Activated CD8-positive, alpha-beta T cell treated with anti-CD3 and anti-CD28 coated beads for 36 hours (primary cell): ENCODE measurements at regions of chr12 and their contacts with region 1.

Region 1: DNA sequence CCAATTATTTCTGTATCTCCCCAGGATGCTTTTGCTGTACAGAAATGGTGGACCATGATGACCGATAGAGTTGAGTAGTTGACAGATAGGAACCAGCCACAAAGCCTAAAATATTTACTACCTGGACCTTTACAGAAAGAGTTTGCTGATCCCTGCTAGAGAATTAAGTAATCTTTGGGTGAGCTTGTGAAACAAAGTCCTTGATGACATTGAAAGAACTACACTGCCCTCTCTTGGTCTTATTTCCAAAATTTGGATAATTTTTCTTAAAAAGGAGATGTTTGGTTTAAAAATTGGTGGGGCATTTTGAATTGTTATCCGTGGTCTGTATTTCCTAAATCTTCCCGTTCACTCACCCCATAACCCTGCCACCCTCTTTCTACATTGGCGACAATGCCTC is 13.7 kb upstream of the TCTN1 start:
- DNase-seq: no peak
- ATAC-seq: no peak
- H3K4me3 Mint-ChIP-seq: no peak overlapping the region
- H3K27ac Mint-ChIP-seq: no peak overlapping the region
- H3K4me1 Mint-ChIP-seq: peaks cover 7% of the 10 kb centered on the region
- H3K27me3 Mint-ChIP-seq: no peaks in the 10 kb centered on the region
- CTCF ChIP-seq: peak; percentile 61

Region 2: GRCh38 chr12:110431957-110432587 is 168.2 kb before region 1 on chr12:
- CTCF ChIA-PET with region 1: interaction called, 15 read pairs
- POLR2A ChIA-PET with region 1: no interaction called
- intact Hi-C with region 1: no loop called
- DNase-seq: peak; percentile 39
- ATAC-seq: peak; percentile 40
- H3K4me3 Mint-ChIP-seq: no peak overlapping the region
- H3K27ac Mint-ChIP-seq: no peak overlapping the region
- H3K4me1 Mint-ChIP-seq: peaks cover 5% of the 10 kb centered on the region
- H3K27me3 Mint-ChIP-seq: no peaks in the 10 kb centered on the region
- CTCF ChIP-seq: no peak

Region 3: GRCh38 chr12:110501752-110502738 is 98.2 kb before region 1 on chr12 and contains the starts of genes RAD9B and VPS29:
- CTCF ChIA-PET with region 1: interaction called, 84 read pairs
- POLR2A ChIA-PET with region 1: interaction called, 15 read pairs
- intact Hi-C with region 1: no loop called
- DNase-seq: peak; percentile 100
- ATAC-seq: peak; percentile 95
- H3K4me3 Mint-ChIP-seq: peak within 1 kb of the TSS; percentile 97
- H3K27ac Mint-ChIP-seq: peak within 1 kb of the TSS; percentile 96
- H3K4me1 Mint-ChIP-seq: peaks cover 30% of the 10 kb centered on the region
- H3K27me3 Mint-ChIP-seq: no peaks in the 10 kb centered on the region
- CTCF ChIP-seq: no peak
- total RNA-seq, gene RAD9B: 1.7 to 1.9 TPM
- total RNA-seq, gene VPS29: 71.7 to 76.4 TPM

Region 4: GRCh38 chr12:110531741-110532333 is 68.4 kb before region 1 on chr12:
- CTCF ChIA-PET with region 1: interaction called, 142 read pairs
- POLR2A ChIA-PET with region 1: no interaction called
- intact Hi-C with region 1: no loop called
- DNase-seq: no peak
- ATAC-seq: peak; percentile 71
- H3K4me3 Mint-ChIP-seq: no peak overlapping the region
- H3K27ac Mint-ChIP-seq: peak overlapping the region; percentile 80
- H3K4me1 Mint-ChIP-seq: peaks cover 36% of the 10 kb centered on the region
- H3K27me3 Mint-ChIP-seq: no peaks in the 10 kb centered on the region
- CTCF ChIP-seq: no peak

Region 5: DNA sequence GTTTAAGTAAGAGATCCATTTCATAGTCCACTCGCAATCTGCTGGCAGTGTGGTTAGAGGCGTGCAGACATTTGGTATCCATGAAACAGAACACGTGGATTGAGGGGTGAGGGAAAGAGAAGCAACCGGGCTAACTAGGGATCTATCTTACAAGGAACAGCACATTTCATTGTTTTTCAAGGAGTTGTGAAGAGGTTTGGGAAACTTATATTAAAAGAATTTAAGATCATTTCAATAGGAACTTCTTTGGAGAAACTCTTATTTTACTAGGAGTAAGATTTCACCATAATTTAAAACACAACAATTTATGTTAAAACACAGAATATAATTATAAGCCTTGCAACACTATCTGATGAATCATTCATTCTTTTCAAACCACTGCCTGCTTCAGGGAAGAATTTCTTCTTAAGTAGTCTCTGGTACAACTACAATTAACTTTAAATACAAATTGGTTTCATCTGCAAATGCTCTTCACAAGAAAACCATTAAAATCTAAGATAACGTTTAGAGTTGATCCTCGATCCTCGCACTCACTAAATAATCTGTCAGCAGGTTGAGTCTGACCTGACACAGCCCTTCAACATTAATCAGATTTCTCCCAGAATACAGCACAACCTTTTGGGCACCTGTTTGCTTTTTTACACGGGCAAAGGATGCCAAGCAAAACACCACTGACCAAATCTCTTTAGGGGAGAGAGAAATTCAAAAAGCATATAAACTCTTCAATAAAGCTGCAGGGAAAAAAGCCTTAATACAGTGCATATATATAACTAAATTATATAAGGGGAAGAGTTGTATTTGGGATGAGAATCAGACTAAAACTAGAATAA is 44.5 kb before region 1 on chr12:
- CTCF ChIA-PET with region 1: interaction called, 171 read pairs
- POLR2A ChIA-PET with region 1: interaction called, 3 read pairs
- intact Hi-C with region 1: loop called (anchors 5 kb)
- DNase-seq: no peak
- ATAC-seq: no peak
- H3K4me3 Mint-ChIP-seq: no peak overlapping the region
- H3K27ac Mint-ChIP-seq: no peak overlapping the region
- H3K4me1 Mint-ChIP-seq: peaks cover 56% of the 10 kb centered on the region
- H3K27me3 Mint-ChIP-seq: no peaks in the 10 kb centered on the region
- CTCF ChIP-seq: no peak

Region 6: DNA sequence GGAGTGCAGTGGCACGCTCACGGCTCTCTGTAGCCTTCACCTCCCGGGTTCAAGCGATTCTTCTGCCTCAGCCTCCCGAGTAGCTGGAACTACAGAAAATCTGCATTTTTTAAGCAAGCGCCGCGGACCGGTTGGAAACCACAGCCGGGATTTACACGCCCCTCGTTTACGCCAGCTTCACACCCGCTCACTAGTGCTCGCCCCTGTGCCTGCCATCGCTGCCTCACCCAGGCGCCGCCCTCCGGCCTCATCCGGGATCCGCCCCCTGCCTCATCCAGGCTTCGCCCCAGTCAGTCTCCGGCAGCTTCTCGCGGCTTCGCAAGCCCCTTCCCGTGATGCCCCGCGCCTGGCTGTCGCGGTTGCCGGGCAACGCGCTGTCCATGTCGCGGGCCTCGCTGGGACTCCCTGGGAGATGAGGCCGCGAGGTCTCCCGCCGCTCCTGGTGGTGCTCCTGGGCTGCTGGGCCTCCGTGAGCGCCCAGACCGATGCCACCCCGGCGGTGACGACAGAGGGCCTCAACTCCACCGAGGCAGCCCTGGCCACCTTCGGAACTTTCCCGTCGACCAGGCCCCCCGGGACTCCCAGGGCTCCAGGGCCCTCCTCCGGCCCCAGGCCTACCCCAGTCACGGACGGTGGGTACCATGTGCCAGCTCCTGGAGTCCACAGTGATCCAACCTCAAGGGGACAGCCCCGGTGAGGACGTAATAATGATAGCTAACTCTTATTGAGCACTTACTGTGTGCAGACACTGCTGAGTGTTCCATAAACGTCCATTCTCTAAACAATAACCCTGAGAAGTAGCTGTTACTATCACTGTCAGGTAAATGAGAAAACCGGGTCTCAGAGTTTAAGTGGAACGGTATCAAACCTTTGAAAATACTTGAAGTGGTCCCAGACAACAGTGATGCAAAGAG is 13.8 kb after region 1 on chr12 and contains the start of gene TCTN1:
- CTCF ChIA-PET with region 1: interaction called, 53 read pairs
- POLR2A ChIA-PET with region 1: interaction called, 4 read pairs
- intact Hi-C with region 1: no loop called
- DNase-seq: peak; percentile 98
- ATAC-seq: peak; percentile 100
- H3K4me3 Mint-ChIP-seq: peak within 1 kb of the TSS; percentile 83
- H3K27ac Mint-ChIP-seq: peak within 1 kb of the TSS; percentile 86
- H3K4me1 Mint-ChIP-seq: peaks cover 10% of the 10 kb centered on the region
- H3K27me3 Mint-ChIP-seq: no peaks in the 10 kb centered on the region
- CTCF ChIP-seq: no peak
- total RNA-seq, gene TCTN1: 7.9 to 8.6 TPM